Ascending aorta (tissue), 2 donors: ENCODE measurements at regions of chr10 and their contacts with region 1.

Region 1: GRCh38 chr10:80078448-80079311 is at the start of gene TMEM254:
- DNase-seq: peak; percentile 56 to 94
- H3K4me3 ChIP-seq: peak within 1 kb of the TSS; percentile 84 to 97
- H3K27ac ChIP-seq: peak within 1 kb of the TSS; percentile 92 to 94
- H3K4me1 ChIP-seq: peaks cover 2 to 11% of the 10 kb centered on the region in 2 donors
- H3K27me3 ChIP-seq: no peaks in the 10 kb centered on the region
- CTCF ChIP-seq: no peak
- total RNA-seq, gene TMEM254: 2.4 TPM

Region 2: DNA sequence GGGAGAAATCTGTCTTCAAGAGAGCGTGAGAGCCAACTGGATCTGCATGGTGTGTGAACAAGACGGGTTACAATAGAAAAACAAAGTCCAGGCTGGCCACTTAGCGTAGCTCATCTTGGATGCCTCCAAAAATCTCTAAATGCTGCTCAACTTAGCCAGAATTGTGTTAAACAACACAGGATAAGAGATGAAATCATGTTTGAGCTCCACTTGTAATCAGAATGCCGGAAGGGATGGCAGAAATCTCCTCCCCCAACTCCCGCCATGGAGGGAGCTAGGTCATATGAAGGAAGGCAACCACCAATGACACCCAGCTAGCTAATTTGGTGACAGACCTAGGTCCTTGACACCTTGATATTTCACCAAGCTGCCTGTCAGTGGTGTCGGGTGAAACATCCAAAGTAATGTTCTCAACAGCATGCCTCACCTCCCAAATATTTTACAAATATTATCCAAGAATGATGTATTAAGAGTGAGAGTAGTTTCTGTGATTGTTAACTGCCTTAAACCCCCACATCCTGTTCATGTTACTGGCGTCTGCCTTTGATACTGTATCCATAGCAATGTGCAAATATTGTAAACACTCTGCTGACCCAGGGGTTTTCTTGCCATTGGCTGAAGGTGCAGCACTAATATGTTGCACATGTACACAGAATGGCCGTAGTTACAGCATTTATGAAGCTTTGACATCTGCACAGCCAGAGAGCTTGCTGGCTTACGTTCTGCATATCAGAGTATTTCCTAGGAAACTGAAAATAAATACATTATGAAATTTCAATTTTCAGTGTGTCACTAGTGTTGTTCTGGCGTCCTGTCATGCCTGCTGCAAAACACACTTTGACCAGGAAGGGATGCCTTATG is 25.6 kb after region 1 on chr10:
- intact Hi-C with region 1: loop called (anchors 1 kb)
- DNase-seq: no peak
- H3K4me3 ChIP-seq: peak overlapping the region in 1 of 2 donors; percentile 27
- H3K27ac ChIP-seq: peak overlapping the region; percentile 50 to 61
- H3K4me1 ChIP-seq: peaks cover 0 to 8% of the 10 kb centered on the region in 2 donors
- H3K27me3 ChIP-seq: no peaks in the 10 kb centered on the region
- CTCF ChIP-seq: no peak

Region 3: GRCh38 chr10:80132299-80133139 is 53.8 kb after region 1 on chr10 and contains the start of gene PLAC9:
- intact Hi-C with region 1: loop called (anchors 2 kb)
- DNase-seq: peak in 1 of 2 donors; percentile 77
- H3K4me3 ChIP-seq: peak within 1 kb of the TSS; percentile 61 to 73
- H3K27ac ChIP-seq: peak within 1 kb of the TSS; percentile 74 to 85
- H3K4me1 ChIP-seq: peaks cover 0 to 15% of the 10 kb centered on the region in 2 donors
- H3K27me3 ChIP-seq: no peaks in the 10 kb centered on the region
- CTCF ChIP-seq: no peak
- total RNA-seq, gene PLAC9: 221 TPM

Region 4: DNA sequence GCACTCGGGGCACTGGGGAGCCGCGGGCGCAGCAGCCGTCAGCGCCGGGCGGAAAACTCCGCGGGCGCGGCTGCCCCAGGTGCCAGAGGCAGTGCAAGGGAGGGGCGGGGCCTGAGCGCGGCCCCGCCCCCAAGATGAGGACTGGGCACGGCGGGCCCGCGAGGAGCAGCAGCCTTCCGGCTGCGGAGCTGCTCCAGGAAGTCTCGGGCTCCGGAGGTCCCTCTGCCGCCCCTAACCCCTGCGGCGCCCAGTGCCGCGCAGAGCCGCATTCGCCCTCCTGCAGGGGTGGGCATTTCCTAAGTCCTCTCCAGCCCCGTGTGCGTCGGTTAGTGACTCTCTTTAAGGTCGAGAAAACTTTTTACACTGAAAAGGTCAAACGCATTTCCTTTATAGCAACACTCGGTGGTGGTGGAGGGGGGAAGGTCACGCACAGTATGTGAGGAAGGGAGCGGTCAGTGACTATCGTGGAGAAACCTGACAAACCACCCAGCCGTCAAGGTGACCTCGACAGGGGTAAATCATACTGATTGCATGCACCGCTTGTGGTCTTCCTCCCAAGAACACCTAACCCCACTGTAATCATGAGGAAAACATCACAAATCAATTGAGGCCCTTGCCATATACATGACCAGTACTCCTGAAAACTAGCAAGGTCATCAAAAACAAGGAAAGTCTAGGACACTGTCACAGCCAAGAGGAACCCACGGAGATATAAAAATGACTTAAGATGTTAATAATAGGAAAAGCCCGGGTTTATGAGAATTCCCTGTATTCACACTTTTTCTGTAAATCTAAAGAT is 127.0 kb after region 1 on chr10 and contains the start of gene ANXA11:
- intact Hi-C with region 1: loop called (anchors 5 kb)
- DNase-seq: peak; percentile 58 to 92
- H3K4me3 ChIP-seq: peak within 1 kb of the TSS; percentile 73 to 88
- H3K27ac ChIP-seq: peak within 1 kb of the TSS; percentile 96 to 97
- H3K4me1 ChIP-seq: peaks cover 18 to 48% of the 10 kb centered on the region in 2 donors
- H3K27me3 ChIP-seq: no peaks in the 10 kb centered on the region
- CTCF ChIP-seq: no peak
- total RNA-seq, gene ANXA11: 237 TPM